ENCODE measurements at regions of chr3 and their contacts with region 1.

Region 1: GRCh38 chr3:122383771-122384697 is at the start of gene FAM162A:
- DNase-seq: peak; percentile 89 to 97 (median 93)
- ATAC-seq: peak; percentile 94
- H3K4me3 ChIP-seq: peak within 1 kb of the TSS; percentile 79 to 91
- H3K4me3 Mint-ChIP-seq: peak within 1 kb of the TSS; percentile 94
- H3K27ac ChIP-seq: peak within 1 kb of the TSS; percentile 73 to 83
- H3K27ac Mint-ChIP-seq: peak within 1 kb of the TSS; percentile 94
- H3K4me1 ChIP-seq: peaks cover 18% of the 10 kb centered on the region
- H3K4me1 Mint-ChIP-seq: peaks cover 51% of the 10 kb centered on the region
- H3K27me3 ChIP-seq: no peaks in the 10 kb centered on the region
- H3K27me3 Mint-ChIP-seq: no peaks in the 10 kb centered on the region
- CTCF ChIP-seq: peak; percentile 66
- total RNA-seq, gene FAM162A: 36.9 to 38.2 TPM

Region 2: DNA sequence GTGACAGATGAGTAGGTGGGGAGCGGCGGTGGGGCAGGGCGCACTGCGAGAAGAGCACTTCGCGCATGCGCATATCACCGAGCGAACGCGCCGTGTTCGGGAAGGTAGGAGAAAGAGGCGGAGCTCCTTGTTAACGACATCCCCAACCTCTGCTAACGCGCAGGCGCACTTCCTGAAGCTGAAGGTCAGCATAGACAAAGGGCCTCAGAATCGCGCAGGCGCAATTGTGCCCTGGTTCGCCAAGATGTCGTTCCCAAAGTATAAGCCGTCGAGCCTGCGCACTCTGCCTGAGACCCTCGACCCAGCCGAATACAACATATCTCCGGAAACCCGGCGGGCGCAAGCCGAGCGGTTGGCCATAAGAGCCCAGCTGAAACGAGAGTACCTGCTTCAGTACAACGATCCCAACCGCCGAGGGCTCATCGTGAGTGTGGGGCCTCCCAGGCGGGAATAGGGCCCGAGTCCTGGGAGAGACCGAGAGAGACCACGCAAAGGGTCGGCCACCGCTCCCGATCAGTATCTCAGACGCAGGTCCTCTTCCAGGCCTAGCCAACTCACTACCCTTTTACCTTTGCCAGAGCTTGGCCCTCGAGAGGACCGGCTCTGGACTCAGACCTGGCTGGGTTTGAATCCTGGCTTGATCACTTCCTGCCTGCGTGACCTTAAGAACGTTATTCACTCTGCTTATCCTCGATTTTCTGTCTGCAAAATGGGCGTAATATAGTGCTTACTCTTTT is 1787.8 kb before region 1 on chr3 and contains the start of gene NDUFB4:
- CTCF ChIA-PET with region 1: no interaction called
- POLR2A ChIA-PET with region 1: no interaction called
- intact Hi-C with region 1: loop called in 1 of 2 experiments (anchors 10 kb)
- DNase-seq: peak; percentile 87 to 99 (median 95)
- ATAC-seq: peak; percentile 92
- H3K4me3 ChIP-seq: peak within 1 kb of the TSS; percentile 77 to 92
- H3K4me3 Mint-ChIP-seq: peak within 1 kb of the TSS; percentile 94
- H3K27ac ChIP-seq: peak within 1 kb of the TSS; percentile 91 to 95
- H3K27ac Mint-ChIP-seq: peak within 1 kb of the TSS; percentile 97
- H3K4me1 ChIP-seq: peaks cover 34% of the 10 kb centered on the region
- H3K4me1 Mint-ChIP-seq: peaks cover 12% of the 10 kb centered on the region
- H3K27me3 ChIP-seq: no peaks in the 10 kb centered on the region
- H3K27me3 Mint-ChIP-seq: no peaks in the 10 kb centered on the region
- CTCF ChIP-seq: no peak
- total RNA-seq, gene NDUFB4: 63.2 to 71.5 TPM

Region 3: DNA sequence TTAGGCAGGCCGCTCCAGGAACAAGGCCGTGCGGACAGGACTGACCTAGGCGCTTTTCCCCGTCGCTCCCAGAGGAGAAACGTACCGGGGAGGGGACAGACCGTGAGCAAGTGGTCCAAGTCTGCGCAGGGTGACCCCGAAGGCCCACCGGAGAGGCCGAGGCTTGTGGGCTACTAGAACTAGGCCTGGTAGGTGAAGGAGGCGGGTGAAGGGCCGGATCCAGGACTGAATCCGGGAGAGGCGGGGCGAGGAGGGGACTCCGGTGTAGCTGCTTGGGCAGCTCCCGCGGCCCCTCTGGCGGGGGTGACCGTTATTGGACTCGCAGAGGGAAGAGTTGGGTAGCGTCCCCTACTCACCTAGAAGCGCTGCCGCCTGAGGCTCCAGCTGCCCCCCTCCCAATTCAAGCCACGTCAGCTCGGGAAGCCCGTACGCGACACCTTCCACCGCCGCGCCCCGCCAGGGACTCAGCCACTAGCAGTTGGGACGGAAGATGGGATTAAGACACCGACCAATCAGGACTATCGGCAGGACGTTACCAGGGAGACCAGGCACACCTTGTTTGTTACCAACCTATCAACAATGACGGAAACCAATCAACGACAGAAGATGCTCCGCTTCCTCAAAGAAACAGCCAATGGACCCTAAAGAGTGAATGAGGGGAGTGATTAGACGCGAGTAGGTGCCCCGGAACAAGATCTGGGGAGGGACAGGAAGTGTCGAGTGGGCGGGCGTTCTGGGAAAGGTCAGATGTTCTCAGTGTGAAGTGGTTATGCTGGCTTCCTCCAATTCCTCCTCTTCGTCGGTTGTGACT is 634.6 kb before region 1 on chr3 and contains the start of gene GOLGB1:
- CTCF ChIA-PET with region 1: no interaction called
- POLR2A ChIA-PET with region 1: interaction called, 3 read pairs
- intact Hi-C with region 1: loop called (anchors 1 to 5 kb)
- DNase-seq: peak; percentile 74 to 99 (median 90)
- ATAC-seq: peak; percentile 94
- H3K4me3 ChIP-seq: peak within 1 kb of the TSS; percentile 86 to 94
- H3K4me3 Mint-ChIP-seq: no peak within 1 kb of the TSS
- H3K27ac ChIP-seq: peak within 1 kb of the TSS; percentile 97 to 98
- H3K27ac Mint-ChIP-seq: no peak within 1 kb of the TSS
- H3K4me1 ChIP-seq: peaks cover 19% of the 10 kb centered on the region
- H3K4me1 Mint-ChIP-seq: peaks cover 14% of the 10 kb centered on the region
- H3K27me3 ChIP-seq: peaks cover 0 to 6% of the 10 kb centered on the region in 2 experiments
- H3K27me3 Mint-ChIP-seq: peaks cover 4% of the 10 kb centered on the region
- CTCF ChIP-seq: no peak
- total RNA-seq, gene GOLGB1: 47.4 to 53.9 TPM

Region 4: GRCh38 chr3:122409446-122409845 is 25.4 kb after region 1 on chr3:
- CTCF ChIA-PET with region 1: interaction called, 11 read pairs
- POLR2A ChIA-PET with region 1: interaction called, 6 read pairs
- intact Hi-C with region 1: no loop called
- DNase-seq: no peak
- ATAC-seq: no peak
- H3K4me3 ChIP-seq: no peak overlapping the region
- H3K4me3 Mint-ChIP-seq: no peak overlapping the region
- H3K27ac ChIP-seq: no peak overlapping the region
- H3K27ac Mint-ChIP-seq: peak overlapping the region; percentile 62
- H3K4me1 ChIP-seq: peaks cover 2% of the 10 kb centered on the region
- H3K4me1 Mint-ChIP-seq: peaks cover 27% of the 10 kb centered on the region
- H3K27me3 ChIP-seq: no peaks in the 10 kb centered on the region
- H3K27me3 Mint-ChIP-seq: no peaks in the 10 kb centered on the region
- CTCF ChIP-seq: no peak

Region 5: GRCh38 chr3:122564155-122564912 is 180.3 kb after region 1 on chr3 and contains the starts of genes DTX3L and PARP9:
- CTCF ChIA-PET with region 1: interaction called, 4 read pairs
- POLR2A ChIA-PET with region 1: interaction called, 8 read pairs
- intact Hi-C with region 1: loop called (anchors 2 to 5 kb)
- DNase-seq: peak; percentile 39 to 91 (median 80)
- ATAC-seq: peak; percentile 93
- H3K4me3 ChIP-seq: peak within 1 kb of the TSS; percentile 81 to 85
- H3K4me3 Mint-ChIP-seq: peak within 1 kb of the TSS; percentile 92
- H3K27ac ChIP-seq: peak within 1 kb of the TSS; percentile 83 to 88
- H3K27ac Mint-ChIP-seq: peak within 1 kb of the TSS; percentile 96
- H3K4me1 ChIP-seq: peaks cover 39% of the 10 kb centered on the region
- H3K4me1 Mint-ChIP-seq: peaks cover 75% of the 10 kb centered on the region
- H3K27me3 ChIP-seq: no peaks in the 10 kb centered on the region
- H3K27me3 Mint-ChIP-seq: no peaks in the 10 kb centered on the region
- CTCF ChIP-seq: no peak
- total RNA-seq, gene DTX3L: 14.1 to 14.3 TPM
- total RNA-seq, gene PARP9: 12.0 to 12.1 TPM

Region 6: GRCh38 chr3:123201566-123202427 is 817.8 kb after region 1 on chr3 and contains the start of gene SEC22A:
- CTCF ChIA-PET with region 1: no interaction called
- POLR2A ChIA-PET with region 1: interaction called, 4 read pairs
- intact Hi-C with region 1: loop called (anchors 1 to 5 kb)
- DNase-seq: peak; percentile 91 to 99 (median 96)
- ATAC-seq: peak; percentile 96
- H3K4me3 ChIP-seq: peak within 1 kb of the TSS; percentile 82 to 96
- H3K4me3 Mint-ChIP-seq: peak within 1 kb of the TSS; percentile 83
- H3K27ac ChIP-seq: peak within 1 kb of the TSS; percentile 94 to 95
- H3K27ac Mint-ChIP-seq: peak within 1 kb of the TSS; percentile 98
- H3K4me1 ChIP-seq: peaks cover 18% of the 10 kb centered on the region
- H3K4me1 Mint-ChIP-seq: peaks cover 26% of the 10 kb centered on the region
- H3K27me3 ChIP-seq: no peaks in the 10 kb centered on the region
- H3K27me3 Mint-ChIP-seq: no peaks in the 10 kb centered on the region
- CTCF ChIP-seq: no peak
- total RNA-seq, gene SEC22A: 8.6 to 9.1 TPM

Region 7: GRCh38 chr3:123960781-123961507 is 1576.9 kb after region 1 on chr3 and contains the start of gene CCDC14:
- CTCF ChIA-PET with region 1: no interaction called
- POLR2A ChIA-PET with region 1: no interaction called
- intact Hi-C with region 1: loop called in 1 of 2 experiments (anchors 10 kb)
- DNase-seq: peak; percentile 37 to 84 (median 73)
- ATAC-seq: peak; percentile 88
- H3K4me3 ChIP-seq: peak within 1 kb of the TSS; percentile 63
- H3K4me3 Mint-ChIP-seq: peak within 1 kb of the TSS; percentile 96
- H3K27ac ChIP-seq: peak within 1 kb of the TSS; percentile 52 to 59
- H3K27ac Mint-ChIP-seq: peak within 1 kb of the TSS; percentile 93
- H3K4me1 ChIP-seq: peaks cover 16% of the 10 kb centered on the region
- H3K4me1 Mint-ChIP-seq: peaks cover 30% of the 10 kb centered on the region
- H3K27me3 ChIP-seq: no peaks in the 10 kb centered on the region
- H3K27me3 Mint-ChIP-seq: peaks cover 5% of the 10 kb centered on the region
- CTCF ChIP-seq: no peak
- total RNA-seq, gene CCDC14: 21.9 to 23.8 TPM

Measured in CD8-positive, alpha-beta T cell (primary cell).